IMR-90 (cell line): ENCODE measurements at regions of chr12 and their contacts with region 1.

Region 1: DNA sequence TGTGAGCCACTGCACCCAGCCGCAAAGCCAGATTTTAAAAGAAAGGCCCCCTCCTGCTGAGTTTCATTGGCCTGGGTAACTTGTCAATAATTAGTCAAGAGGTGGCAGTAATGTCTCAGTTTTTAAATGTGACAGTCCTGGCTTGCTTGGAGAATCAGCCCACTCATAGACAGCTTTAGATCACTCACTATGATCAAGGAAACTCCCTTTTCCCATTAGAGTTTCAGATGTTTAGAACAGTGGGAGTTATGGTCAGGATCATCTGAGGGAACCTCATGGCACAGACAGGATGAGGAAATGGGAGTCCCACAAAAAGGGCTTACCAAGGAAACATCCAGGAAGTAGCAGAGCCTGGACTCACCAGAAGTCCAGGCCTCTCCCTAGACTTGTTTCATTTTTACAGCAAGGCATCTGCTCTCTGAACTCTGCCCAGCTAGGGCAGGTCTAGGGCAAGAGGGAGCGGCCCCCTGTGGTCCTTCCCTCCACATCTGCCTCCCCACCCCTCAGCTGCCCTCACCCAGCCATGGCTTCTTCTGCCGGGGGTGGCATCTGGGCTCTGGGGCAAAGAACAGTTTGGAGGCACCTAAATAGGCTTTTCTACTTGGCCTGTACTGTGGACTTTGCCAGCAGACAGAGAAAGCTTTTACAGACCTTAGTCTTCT is 11.2 kb downstream of the BCL2L14 start:
- DNase-seq: peak; percentile 55
- ATAC-seq: peak; percentile 75
- H3K4me3 ChIP-seq: no peak overlapping the region
- H3K27ac ChIP-seq: no peak overlapping the region
- H3K4me1 ChIP-seq: peaks cover 3% of the 10 kb centered on the region
- H3K27me3 ChIP-seq: no peaks in the 10 kb centered on the region
- CTCF ChIP-seq: peak; percentile 46
- POLR2A ChIP-seq: no peak
- RAD21 ChIP-seq: peak; percentile 56

Region 2: DNA sequence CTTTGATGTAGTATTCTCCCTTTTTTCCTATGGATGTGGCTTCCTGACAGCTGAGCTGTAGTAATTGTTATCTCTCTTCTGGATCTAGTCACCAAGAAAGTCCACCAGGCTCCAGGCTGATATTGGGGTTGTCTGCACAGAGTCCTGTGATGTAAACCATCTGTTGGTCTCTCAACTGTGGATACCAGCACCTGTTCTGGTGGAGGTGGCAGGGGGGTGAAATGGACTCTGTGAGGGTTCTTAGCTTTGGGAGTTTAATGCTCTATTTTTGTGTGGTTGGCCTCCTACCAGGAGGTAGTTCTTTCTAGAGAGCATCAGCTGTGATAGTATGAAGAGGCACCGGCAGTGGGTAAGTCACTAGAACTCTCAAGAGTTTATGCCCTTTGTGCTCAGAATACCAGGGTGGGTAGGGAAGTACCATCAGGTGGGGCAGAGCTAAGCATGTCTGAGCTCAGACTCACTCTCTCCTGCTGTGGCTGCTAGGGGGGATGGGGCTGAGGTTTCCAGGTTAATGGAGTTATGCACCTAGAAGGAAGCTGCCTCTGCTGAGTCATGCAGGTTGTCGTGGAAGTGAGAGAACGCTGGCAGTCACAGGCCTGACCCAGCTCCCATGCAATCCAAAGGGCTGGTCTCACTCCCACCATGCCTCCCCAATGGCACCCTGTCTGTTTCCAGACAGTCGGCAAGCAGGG is 1139.9 kb before region 1 on chr12:
- CTCF ChIA-PET with region 1: no interaction called
- POLR2A ChIA-PET with region 1: no interaction called
- dilution Hi-C with region 1: no loop called
- in situ Hi-C with region 1: no loop called
- intact Hi-C with region 1: no loop called
- DNase-seq: no peak
- ATAC-seq: no peak
- H3K4me3 ChIP-seq: no peak overlapping the region
- H3K27ac ChIP-seq: no peak overlapping the region
- H3K4me1 ChIP-seq: peaks cover 2% of the 10 kb centered on the region; the same call in 1 of the 2 replicates
- H3K27me3 ChIP-seq: no peaks in the 10 kb centered on the region
- CTCF ChIP-seq: no peak
- POLR2A ChIP-seq: no peak
- RAD21 ChIP-seq: no peak

Region 3: GRCh38 chr12:11695321-11695720 is 386.6 kb before region 1 on chr12:
- CTCF ChIA-PET with region 1: no interaction called
- POLR2A ChIA-PET with region 1: no interaction called
- dilution Hi-C with region 1: no loop called
- in situ Hi-C with region 1: no loop called
- intact Hi-C with region 1: no loop called
- DNase-seq: peak; percentile 58
- ATAC-seq: peak; percentile 32
- H3K4me3 ChIP-seq: no peak overlapping the region
- H3K27ac ChIP-seq: no peak overlapping the region
- H3K4me1 ChIP-seq: peaks cover 6% of the 10 kb centered on the region
- H3K27me3 ChIP-seq: no peaks in the 10 kb centered on the region
- CTCF ChIP-seq: no peak
- POLR2A ChIP-seq: no peak
- RAD21 ChIP-seq: no peak

Region 4: DNA sequence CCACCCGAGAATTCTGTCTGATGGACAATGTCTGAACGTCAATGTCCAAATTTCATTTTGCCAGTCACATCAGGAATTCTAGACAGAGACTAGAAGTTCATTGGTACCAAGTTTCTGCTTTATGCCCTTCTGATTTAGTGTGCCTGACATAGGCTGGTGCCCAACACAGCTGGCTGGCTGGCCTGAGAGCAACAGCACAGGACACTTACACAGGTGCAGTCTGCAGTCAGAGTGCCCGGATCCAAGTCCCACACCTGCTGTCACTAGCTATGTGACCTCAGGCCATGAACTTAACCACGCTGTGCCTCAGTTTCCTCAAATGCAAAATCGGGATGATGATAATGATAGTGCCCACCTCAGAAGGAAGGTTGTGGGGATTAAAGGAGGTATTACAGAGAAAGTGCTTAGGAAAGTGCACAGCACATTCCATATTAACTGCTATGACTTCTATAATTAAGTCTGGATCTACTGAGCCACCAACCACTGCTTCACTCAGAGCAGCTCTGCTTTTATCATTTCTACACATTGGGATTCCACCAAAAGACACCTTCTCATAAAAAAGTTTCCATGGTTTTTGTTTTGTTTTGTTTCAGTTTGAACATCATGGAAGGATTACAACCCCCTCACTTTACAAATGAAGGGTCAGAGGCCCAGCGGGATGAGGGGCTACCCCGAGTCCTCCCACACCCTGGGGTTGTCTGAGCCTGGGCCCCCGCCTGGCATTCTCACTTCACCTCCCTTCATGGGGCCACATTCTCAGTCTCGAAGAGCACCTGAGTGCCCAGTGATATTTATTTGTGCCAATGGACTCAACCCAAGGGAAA is 180.1 kb before region 1 on chr12:
- CTCF ChIA-PET with region 1: no interaction called
- POLR2A ChIA-PET with region 1: no interaction called
- dilution Hi-C with region 1: no loop called
- in situ Hi-C with region 1: no loop called
- intact Hi-C with region 1: no loop called
- DNase-seq: no peak
- ATAC-seq: no peak
- H3K4me3 ChIP-seq: no peak overlapping the region
- H3K27ac ChIP-seq: no peak overlapping the region
- H3K4me1 ChIP-seq: peaks cover 4% of the 10 kb centered on the region; the same call in 1 of the 2 replicates
- H3K27me3 ChIP-seq: no peaks in the 10 kb centered on the region
- CTCF ChIP-seq: no peak
- POLR2A ChIP-seq: no peak
- RAD21 ChIP-seq: no peak

Region 5: DNA sequence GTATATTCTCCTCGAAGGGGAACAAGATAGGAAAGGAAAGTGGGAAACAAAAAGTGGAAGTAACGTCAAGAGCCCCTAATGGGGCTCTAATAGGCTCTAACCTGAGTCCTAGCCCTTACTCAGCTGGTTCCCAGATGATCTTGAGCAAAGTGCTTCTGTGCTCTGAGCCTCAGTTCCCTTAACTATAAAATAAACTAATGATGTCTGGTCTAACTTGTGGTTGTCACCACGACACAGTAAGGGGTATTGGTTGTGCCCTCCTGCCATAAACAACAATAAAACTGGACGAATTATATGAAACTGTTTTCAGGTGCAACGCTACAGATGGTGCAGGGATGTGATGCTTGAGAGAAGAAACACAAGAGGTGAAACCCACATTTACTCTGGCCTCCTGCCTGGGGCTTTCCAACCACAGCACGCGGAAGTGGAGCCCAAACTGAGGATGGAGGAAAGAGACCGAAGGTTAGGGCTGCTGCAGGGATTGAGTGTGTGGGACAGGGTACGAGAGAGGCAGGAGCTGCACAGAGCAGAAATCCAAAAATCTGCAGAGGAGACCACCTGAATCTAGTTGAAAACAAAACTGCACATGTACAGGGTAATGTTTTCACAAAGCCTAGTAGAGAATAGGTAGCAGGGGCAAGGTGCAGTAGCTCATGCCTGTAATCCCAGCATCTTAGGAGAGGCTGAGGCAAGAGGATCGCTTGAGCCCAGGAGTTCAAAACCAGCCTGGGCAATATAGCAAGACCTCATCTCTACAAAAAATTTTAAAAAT is 56.9 kb before region 1 on chr12:
- CTCF ChIA-PET with region 1: no interaction called
- POLR2A ChIA-PET with region 1: no interaction called
- dilution Hi-C with region 1: no loop called
- in situ Hi-C with region 1: no loop called
- intact Hi-C with region 1: no loop called
- DNase-seq: no peak
- ATAC-seq: no peak
- H3K4me3 ChIP-seq: no peak overlapping the region
- H3K27ac ChIP-seq: no peak overlapping the region
- H3K4me1 ChIP-seq: no peaks in the 10 kb centered on the region
- H3K27me3 ChIP-seq: peaks cover 21% of the 10 kb centered on the region
- CTCF ChIP-seq: no peak
- POLR2A ChIP-seq: no peak
- RAD21 ChIP-seq: no peak

Region 6: GRCh38 chr12:12327802-12328201 is 245.8 kb after region 1 on chr12:
- CTCF ChIA-PET with region 1: interaction called, 6 read pairs
- POLR2A ChIA-PET with region 1: no interaction called
- dilution Hi-C with region 1: no loop called
- in situ Hi-C with region 1: loop called (anchors 10 kb)
- intact Hi-C with region 1: loop called (anchors 1 kb)
- DNase-seq: peak; percentile 73
- ATAC-seq: peak; percentile 65
- H3K4me3 ChIP-seq: no peak overlapping the region
- H3K27ac ChIP-seq: no peak overlapping the region
- H3K4me1 ChIP-seq: peaks cover 2% of the 10 kb centered on the region; the same call in 1 of the 2 replicates
- H3K27me3 ChIP-seq: 0 out of 2 replicates have a peak, but pooled peaks cover 2% of the 10 kb centered on the region
- CTCF ChIP-seq: peak; percentile 80
- POLR2A ChIP-seq: no peak
- RAD21 ChIP-seq: peak; percentile 82

Region 7: DNA sequence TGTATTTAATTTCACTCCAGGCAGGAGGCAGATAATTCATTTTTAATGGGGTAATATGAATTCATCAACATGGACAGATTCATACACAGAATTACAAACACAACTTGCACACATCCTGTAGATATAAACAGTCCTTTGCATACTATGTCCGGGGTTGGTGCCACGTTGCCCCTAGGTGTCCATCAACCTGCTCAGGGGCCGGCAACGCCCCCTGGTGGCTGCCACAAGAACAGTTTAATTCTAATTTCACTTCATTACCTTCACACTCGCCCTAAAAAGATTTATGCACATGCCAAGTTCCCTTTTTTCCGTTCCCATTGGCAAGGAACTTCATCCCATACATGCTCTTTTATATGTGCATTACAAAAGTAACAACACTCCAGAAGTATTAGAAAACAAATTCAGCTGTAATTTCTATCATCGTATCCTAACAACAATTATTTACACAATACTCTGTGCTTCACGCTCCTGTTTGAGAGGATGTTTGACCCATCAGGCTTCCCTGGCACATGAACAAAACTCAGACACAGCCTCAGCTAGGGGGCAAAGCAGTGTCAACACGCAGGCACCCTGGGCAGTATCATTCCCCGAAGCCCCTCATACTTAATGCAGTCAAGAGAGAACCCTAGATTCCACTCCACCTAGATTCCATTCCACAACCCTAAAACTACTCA is 252.5 kb after region 1 on chr12:
- CTCF ChIA-PET with region 1: interaction called, 12 read pairs
- POLR2A ChIA-PET with region 1: no interaction called
- dilution Hi-C with region 1: no loop called
- in situ Hi-C with region 1: loop called (anchors 10 kb)
- intact Hi-C with region 1: loop called (anchors 1 kb)
- DNase-seq: peak; percentile 46
- ATAC-seq: peak; percentile 30; the same call in 1 of the 2 replicates
- H3K4me3 ChIP-seq: no peak overlapping the region
- H3K27ac ChIP-seq: no peak overlapping the region
- H3K4me1 ChIP-seq: peaks cover 2% of the 10 kb centered on the region; the same call in 1 of the 2 replicates
- H3K27me3 ChIP-seq: 0 out of 2 replicates have a peak, but pooled peaks cover 2% of the 10 kb centered on the region
- CTCF ChIP-seq: peak; percentile 74
- POLR2A ChIP-seq: no peak
- RAD21 ChIP-seq: peak; percentile 60